MCF 10A (cell line): ENCODE measurements at regions of chr13 and their contacts with region 1.

Region 1: DNA sequence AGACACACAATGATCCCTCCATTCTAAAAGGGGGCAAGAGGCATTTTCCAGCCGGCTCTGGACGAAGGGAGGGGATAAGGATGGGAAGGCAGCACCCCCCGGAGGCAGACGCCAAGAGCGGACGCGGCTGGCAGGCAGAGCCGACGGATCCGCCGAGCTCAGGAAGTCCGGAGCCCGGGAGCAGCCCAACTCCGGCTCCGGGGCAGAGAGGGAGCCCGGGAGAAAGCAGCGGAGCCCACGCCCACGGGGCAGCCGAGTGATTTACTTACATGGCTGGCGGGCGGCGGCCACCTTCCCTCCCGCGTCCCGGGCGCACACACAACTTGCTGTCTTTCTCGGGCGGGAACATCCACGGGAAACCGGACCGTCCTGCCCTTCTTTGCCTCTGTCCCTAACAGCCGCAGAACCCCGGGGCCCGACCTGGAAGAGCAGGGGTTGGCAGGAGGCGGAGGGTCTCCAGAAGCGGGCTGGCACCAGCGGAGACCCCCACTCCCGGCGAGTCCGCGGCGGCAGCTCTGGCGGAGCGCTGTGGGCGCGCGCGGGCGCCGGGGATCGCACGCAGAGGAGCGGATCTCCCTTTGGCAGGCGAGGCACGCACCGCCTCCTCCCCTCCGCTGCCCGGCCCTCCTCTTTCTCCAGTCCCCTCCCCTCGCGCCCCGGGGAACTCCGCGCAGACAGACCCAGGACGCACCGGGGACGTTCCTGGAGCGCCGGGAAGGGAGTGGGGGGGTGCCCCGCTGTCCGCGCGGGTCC is at the start of gene LHFPL6:
- DNase-seq: peak; percentile 74
- H3K4me3 Mint-ChIP-seq: peak within 1 kb of the TSS; percentile 85
- H3K27ac Mint-ChIP-seq: peak within 1 kb of the TSS; percentile 90
- H3K4me1 Mint-ChIP-seq: peaks cover 15% of the 10 kb centered on the region
- H3K27me3 Mint-ChIP-seq: no peaks in the 10 kb centered on the region
- CTCF ChIP-seq: peak; percentile 52
- total RNA-seq, gene LHFPL6: 8.9 and 9.8 TPM in 2 replicates

Region 2: DNA sequence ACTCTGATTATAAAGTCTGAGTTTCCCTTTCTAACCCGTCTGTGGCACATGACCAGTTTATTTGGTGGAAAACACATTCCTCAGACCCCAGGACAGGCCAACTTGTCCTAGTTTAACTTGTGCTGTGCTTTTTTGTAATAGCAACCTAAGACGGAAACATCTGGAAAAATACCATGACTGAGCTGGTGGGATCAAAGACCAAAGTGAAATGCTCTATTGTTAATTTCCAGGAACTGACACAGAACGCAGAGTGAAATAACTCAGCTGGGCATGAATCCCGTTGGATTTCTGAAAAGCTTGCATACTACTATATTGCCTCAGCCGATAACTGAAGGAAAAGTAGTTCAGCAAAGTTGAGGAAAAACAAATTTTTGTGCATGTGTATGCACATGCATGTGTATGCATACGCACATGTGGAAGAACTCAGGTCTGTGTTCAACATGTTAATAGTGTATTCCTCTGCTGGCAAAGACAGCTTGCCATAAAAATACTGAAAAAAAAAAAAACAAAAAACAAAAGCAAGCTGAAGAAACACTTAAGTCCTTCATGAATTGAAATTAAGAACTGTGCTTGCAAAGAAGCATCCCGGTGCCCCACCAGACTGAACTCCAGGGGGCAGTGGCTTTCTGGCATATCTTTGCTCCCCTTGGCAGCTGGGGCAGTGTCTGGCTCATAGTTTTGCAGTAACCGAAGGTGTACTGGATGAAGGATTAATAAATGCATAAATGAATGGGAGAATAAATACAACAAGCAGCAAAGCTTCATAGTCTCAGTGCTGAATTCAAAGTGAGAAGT is 187.6 kb before region 1 on chr13:
- CTCF ChIA-PET with region 1: interaction called, 3 read pairs
- POLR2A ChIA-PET with region 1: interaction called, 3 read pairs
- intact Hi-C with region 1: loop called (anchors 1 kb)
- DNase-seq: peak; percentile 47
- H3K4me3 Mint-ChIP-seq: no peak overlapping the region
- H3K27ac Mint-ChIP-seq: no peak overlapping the region
- H3K4me1 Mint-ChIP-seq: peaks cover 4% of the 10 kb centered on the region
- H3K27me3 Mint-ChIP-seq: no peaks in the 10 kb centered on the region
- CTCF ChIP-seq: peak; percentile 19

Region 3: GRCh38 chr13:39462428-39462827 is 140.4 kb before region 1 on chr13:
- CTCF ChIA-PET with region 1: no interaction called
- POLR2A ChIA-PET with region 1: no interaction called
- intact Hi-C with region 1: no loop called
- DNase-seq: no peak
- H3K4me3 Mint-ChIP-seq: no peak overlapping the region
- H3K27ac Mint-ChIP-seq: no peak overlapping the region
- H3K4me1 Mint-ChIP-seq: no peaks in the 10 kb centered on the region
- H3K27me3 Mint-ChIP-seq: no peaks in the 10 kb centered on the region
- CTCF ChIP-seq: no peak

Region 4: DNA sequence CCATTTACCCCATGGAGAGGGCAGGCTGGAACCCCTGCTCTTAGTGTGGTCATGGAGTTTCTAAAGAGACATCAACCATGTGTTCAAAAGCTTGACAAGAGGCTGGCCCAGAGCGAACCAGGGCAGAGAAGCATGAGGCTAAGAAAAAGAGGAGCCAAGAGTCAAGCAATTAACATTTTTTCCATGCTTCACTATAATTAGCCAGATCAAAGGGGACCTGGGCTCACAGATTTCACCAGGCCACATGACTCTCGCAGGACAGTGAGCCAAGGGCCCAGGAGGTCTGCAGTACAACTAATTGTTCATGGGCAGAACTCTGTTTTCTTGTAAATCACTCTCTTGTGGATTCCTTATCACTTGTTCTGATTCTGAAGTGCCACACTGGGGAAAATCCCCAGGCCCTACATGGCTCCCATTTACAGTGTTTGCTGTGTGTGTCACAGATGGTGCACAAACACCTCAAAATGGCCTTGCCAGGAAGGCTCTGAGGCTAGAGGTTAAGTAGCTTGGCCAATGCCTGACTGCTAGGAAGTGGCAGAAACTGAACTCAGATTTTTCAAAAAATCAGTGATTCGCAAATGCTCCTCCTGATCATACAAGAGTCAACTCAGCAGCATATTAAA is 101.0 kb before region 1 on chr13:
- CTCF ChIA-PET with region 1: interaction called, 5 read pairs
- POLR2A ChIA-PET with region 1: interaction called, 5 read pairs
- intact Hi-C with region 1: loop called (anchors 5 kb)
- DNase-seq: no peak
- H3K4me3 Mint-ChIP-seq: no peak overlapping the region
- H3K27ac Mint-ChIP-seq: no peak overlapping the region
- H3K4me1 Mint-ChIP-seq: no peaks in the 10 kb centered on the region
- H3K27me3 Mint-ChIP-seq: no peaks in the 10 kb centered on the region
- CTCF ChIP-seq: no peak

Region 5: GRCh38 chr13:39586151-39586550 is 16.6 kb before region 1 on chr13:
- CTCF ChIA-PET with region 1: no interaction called
- POLR2A ChIA-PET with region 1: no interaction called
- intact Hi-C with region 1: no loop called
- DNase-seq: no peak
- H3K4me3 Mint-ChIP-seq: no peak overlapping the region
- H3K27ac Mint-ChIP-seq: no peak overlapping the region
- H3K4me1 Mint-ChIP-seq: no peaks in the 10 kb centered on the region
- H3K27me3 Mint-ChIP-seq: no peaks in the 10 kb centered on the region
- CTCF ChIP-seq: no peak